Left colon (tissue), 2 donors: ENCODE measurements at regions of chr7 and their contacts with region 1.

Region 1: GRCh38 chr7:44750921-44751571 is 2.4 kb downstream of the ZMIZ2 start:
- DNase-seq: no peak
- ATAC-seq: no peak

Region 2: GRCh38 chr7:44791278-44792219 is 40.5 kb after region 1 on chr7:
- intact Hi-C with region 1: loop called in 1 of 2 experiments (anchors 5 kb)
- DNase-seq: no peak
- ATAC-seq: no peak

Region 3: GRCh38 chr7:45524445-45524844 is 773.4 kb after region 1 on chr7:
- intact Hi-C with region 1: no loop called
- DNase-seq: no peak
- ATAC-seq: no peak